ENCODE measurements at regions of chr1 and their contacts with region 1.

Region 1: DNA sequence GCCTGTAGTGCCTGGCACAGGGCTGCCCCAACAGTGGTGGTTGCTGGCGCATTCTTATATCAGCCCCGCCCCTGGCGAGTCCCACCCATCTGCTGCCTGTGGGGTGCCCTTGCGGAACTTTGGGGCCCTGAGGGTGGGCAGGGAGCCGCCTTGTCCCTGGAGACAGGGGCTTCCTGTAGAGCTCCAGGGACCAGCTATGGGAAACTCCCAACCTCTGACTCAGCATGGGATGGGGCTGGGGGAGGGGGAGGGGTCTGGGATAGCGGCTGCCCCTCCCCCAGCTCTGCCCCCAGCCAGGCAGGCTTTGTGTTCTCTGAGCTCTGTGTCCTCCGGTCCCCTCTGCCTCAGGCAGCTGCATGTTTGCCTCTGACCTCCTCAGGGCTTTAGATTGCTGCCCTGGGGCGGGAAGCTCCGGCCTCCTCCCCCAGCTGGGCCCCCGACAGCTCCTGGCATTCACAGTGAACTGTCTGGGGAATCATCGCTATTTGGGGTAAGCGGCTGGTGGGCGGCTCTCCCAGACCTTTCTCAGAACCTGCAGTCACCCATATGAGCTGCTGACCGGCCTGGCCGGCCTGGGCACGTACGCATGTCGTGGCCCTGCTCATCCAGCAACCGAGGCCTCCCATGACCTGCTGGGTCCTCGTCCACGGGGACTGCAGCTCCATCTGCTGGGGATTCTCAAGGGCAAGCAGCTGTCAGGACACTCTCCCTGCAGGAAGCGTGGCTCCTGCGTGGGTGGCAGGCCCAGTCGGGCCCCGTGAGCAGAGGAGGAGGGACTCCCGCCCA is 17.0 kb downstream of the ARHGEF16 start:
- DNase-seq: peak; percentile 54 to 72 (median 62)
- ATAC-seq: peak; percentile 50
- H3K4me3 ChIP-seq: no peak overlapping the region
- H3K27ac ChIP-seq: no peak overlapping the region
- H3K4me1 ChIP-seq: peaks cover 0 to 57% of the 10 kb centered on the region in 2 experiments; a peak in 3 of 5 replicates
- H3K27me3 ChIP-seq: peaks cover 4 to 49% of the 10 kb centered on the region in 2 experiments; a peak in 4 of 5 replicates
- CTCF ChIP-seq: peak; percentile 43 to 54 (median 50); a peak in 4 of 6 replicates
- EP300 ChIP-seq: no peak
- POLR2A ChIP-seq: no peak
- RAD21 ChIP-seq: peak in 1 of 2 experiments; percentile 39; a peak in 2 of 4 replicates

Region 2: GRCh38 chr1:3453203-3453761 is 18.2 kb before region 1 on chr1:
- CTCF ChIA-PET with region 1: interaction called, 13 read pairs
- POLR2A ChIA-PET with region 1: interaction called, 6 read pairs
- in situ Hi-C with region 1: no loop called
- intact Hi-C with region 1: no loop called
- DNase-seq: peak; percentile 84 to 91 (median 90)
- ATAC-seq: peak; percentile 86
- H3K4me3 ChIP-seq: no peak overlapping the region
- H3K27ac ChIP-seq: no peak overlapping the region
- H3K4me1 ChIP-seq: peaks cover 0 to 39% of the 10 kb centered on the region in 2 experiments; a peak in 3 of 5 replicates
- H3K27me3 ChIP-seq: peaks cover 5 to 28% of the 10 kb centered on the region in 2 experiments; a peak in 4 of 5 replicates
- CTCF ChIP-seq: peak; percentile 96 to 98 (median 97)
- EP300 ChIP-seq: no peak
- POLR2A ChIP-seq: no peak
- RAD21 ChIP-seq: peak; percentile 80 to 96